MCF 10A (cell line): ENCODE measurements at regions of chrX and their contacts with region 1.

Region 1: DNA sequence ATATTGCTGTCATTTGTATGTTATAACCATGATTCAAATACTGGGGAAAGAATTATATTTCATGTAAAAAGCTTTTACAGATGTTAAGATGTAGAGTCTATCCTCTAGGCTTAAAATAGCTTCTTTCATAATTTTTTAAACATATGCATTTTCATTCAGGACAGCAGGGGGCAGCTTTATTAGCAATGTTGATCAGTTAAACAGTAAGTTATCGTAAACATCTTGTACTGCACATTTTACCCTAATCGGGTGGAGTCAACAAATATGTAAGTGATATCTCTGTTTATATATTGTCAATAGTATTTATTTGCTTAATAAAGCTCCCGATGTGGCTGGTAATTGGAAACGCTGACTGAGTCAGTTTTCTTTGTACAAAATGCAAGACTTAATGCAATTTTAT is 142.5 kb upstream of the MED14 start:
- DNase-seq: peak; percentile 42
- H3K4me3 Mint-ChIP-seq: no peak overlapping the region
- H3K27ac Mint-ChIP-seq: no peak overlapping the region
- H3K4me1 Mint-ChIP-seq: no peaks in the 10 kb centered on the region
- H3K27me3 Mint-ChIP-seq: peaks cover 72% of the 10 kb centered on the region
- CTCF ChIP-seq: peak; percentile 52

Region 2: GRCh38 chrX:40867352-40867751 is 10.5 kb before region 1 on chrX:
- CTCF ChIA-PET with region 1: interaction called, 11 read pairs
- POLR2A ChIA-PET with region 1: interaction called, 8 read pairs
- intact Hi-C with region 1: no loop called
- DNase-seq: peak; percentile 81
- H3K4me3 Mint-ChIP-seq: no peak overlapping the region
- H3K27ac Mint-ChIP-seq: peak overlapping the region; percentile 54
- H3K4me1 Mint-ChIP-seq: peaks cover 23% of the 10 kb centered on the region
- H3K27me3 Mint-ChIP-seq: peaks cover 52% of the 10 kb centered on the region
- CTCF ChIP-seq: no peak

Region 3: DNA sequence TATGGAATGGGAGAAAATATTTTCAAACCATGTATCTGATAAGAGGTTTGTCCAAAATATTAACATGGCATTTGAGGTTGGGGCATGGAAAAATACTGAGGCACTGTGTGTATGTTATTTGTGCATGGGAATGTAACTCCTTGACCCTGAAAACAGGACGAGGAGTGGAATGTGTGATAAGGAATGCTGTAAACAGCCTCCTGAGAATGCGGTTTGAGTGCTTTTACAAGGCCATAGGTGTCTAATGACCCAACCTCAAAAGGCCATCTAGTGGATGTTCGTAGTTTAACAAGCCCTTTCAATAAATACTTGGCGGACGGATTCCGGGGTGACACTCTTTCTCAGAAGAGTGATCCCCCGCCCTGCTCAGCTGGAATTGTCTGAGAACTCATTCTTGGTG is 44.4 kb after region 1 on chrX:
- CTCF ChIA-PET with region 1: interaction called, 5 read pairs
- POLR2A ChIA-PET with region 1: interaction called, 7 read pairs
- intact Hi-C with region 1: loop called (anchors 1 kb)
- DNase-seq: peak; percentile 69
- H3K4me3 Mint-ChIP-seq: no peak overlapping the region
- H3K27ac Mint-ChIP-seq: no peak overlapping the region
- H3K4me1 Mint-ChIP-seq: no peaks in the 10 kb centered on the region
- H3K27me3 Mint-ChIP-seq: peaks cover 72% of the 10 kb centered on the region
- CTCF ChIP-seq: peak; percentile 38